ENCODE measurements at regions of chr6 and their contacts with region 1.

Region 1: DNA sequence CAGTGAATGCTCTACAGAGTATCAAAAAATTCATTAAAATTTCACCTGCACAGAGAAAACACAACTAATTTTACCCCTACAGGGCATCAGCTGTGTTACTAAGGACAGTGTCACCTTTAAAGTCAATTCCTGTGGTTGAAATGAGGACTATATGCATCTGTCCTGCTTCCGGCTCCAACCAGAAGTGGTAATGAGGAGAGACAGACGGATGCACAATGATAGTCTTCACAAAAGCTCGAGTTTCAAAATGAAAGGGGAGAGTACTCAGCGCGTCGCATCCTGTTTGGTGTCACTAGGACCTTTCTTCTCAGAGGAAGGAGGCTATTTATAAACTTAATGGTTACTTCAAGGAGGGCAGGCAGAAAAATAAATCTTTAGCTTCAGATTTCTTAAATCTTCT is 86.5 kb downstream of the LYRM4 start:
- DNase-seq: peak; percentile 62
- CTCF ChIP-seq: no peak

Region 2: GRCh38 chr6:5159148-5159547 is 15.1 kb before region 1 on chr6:
- CTCF ChIA-PET with region 1: interaction called, 21 read pairs
- POLR2A ChIA-PET with region 1: no interaction called
- DNase-seq: no peak
- CTCF ChIP-seq: no peak